Activated CD8-positive, alpha-beta memory T cell treated with anti-CD3 and anti-CD28 coated beads, Interleukin-2, amount 10 ng/mL, durations not matched to agents 7 days and 5 days (primary cell): ENCODE measurements at regions of chr5 and their contacts with region 1.

Region 1: GRCh38 chr5:39217365-39218281 is 1.7 kb downstream of the FYB1 start:
- DNase-seq: peak; percentile 89
- ATAC-seq: peak; percentile 72
- H3K4me3 Mint-ChIP-seq: peak overlapping the region; percentile 81
- H3K27ac Mint-ChIP-seq: peak overlapping the region; percentile 96
- H3K4me1 Mint-ChIP-seq: peaks cover 64% of the 10 kb centered on the region
- H3K27me3 Mint-ChIP-seq: no peaks in the 10 kb centered on the region

Region 2: DNA sequence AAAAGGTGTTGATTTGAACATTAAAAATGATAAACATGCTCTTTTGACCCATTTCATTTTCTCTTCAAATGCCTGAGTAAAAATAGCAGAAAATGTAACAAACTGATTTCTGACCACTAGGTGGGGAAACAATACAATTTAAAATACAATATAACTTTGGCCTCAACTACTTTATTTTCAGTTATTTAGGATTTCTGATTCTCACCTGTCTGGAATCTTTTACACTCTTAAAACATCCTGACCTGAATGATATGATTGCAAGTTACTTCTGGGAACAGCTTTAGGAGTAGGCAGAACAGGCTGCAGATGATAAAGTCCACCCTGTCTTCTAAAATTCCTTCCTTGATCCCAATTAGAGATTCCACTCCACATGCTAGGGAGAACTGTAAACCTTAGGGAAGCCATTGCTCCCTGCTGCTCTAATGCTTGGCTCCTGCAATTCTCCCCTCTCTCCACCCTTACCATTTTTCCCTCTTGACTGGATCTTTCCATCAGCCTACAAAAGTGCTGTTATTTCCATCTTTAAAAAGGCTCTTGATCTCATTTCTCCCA is 68.6 kb before region 1 on chr5:
- CTCF ChIA-PET with region 1: interaction called, 14 read pairs
- DNase-seq: no peak
- ATAC-seq: peak; percentile 52
- H3K4me3 Mint-ChIP-seq: no peak overlapping the region
- H3K27ac Mint-ChIP-seq: peak overlapping the region; percentile 62
- H3K4me1 Mint-ChIP-seq: peaks cover 48% of the 10 kb centered on the region
- H3K27me3 Mint-ChIP-seq: no peaks in the 10 kb centered on the region

Region 3: GRCh38 chr5:39177631-39177964 is 40.0 kb before region 1 on chr5:
- CTCF ChIA-PET with region 1: interaction called, 20 read pairs
- DNase-seq: no peak
- ATAC-seq: peak; percentile 49
- H3K4me3 Mint-ChIP-seq: peak overlapping the region; percentile 68
- H3K27ac Mint-ChIP-seq: peak overlapping the region; percentile 90
- H3K4me1 Mint-ChIP-seq: peaks cover 95% of the 10 kb centered on the region
- H3K27me3 Mint-ChIP-seq: no peaks in the 10 kb centered on the region

Region 4: DNA sequence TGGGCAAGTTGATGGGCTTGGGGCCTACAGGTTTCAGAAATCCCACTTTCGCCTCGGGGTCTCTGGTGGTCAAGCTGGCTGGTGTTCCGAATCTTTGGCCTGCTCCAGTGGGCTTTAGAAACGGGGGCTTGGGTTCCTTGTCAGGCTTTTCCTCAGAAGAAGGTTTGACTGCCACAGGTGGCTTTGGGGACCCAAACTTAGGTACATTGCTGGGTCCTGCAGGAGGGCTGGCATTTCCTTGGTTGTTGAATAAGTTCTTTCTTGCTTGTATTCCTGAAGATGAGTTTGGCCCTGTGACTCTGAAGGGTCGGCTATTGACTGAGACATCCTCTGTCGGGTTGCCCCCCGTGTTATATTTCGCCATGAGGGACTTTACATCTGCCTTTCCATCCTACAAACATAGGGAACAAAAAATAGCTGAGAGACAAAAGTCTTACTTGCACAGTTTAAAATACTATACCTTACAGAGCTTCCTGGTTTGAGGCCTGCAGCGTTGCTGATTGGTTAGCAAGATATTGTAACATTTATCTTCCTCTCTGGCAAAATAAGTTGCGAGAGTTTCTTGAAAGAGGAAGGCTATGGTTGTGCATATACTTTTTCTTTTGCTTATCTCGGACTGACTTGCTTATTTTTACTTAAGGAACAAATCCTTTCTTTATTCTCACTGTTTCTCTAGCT is 14.9 kb before region 1 on chr5:
- CTCF ChIA-PET with region 1: interaction called, 51 read pairs
- DNase-seq: peak; percentile 68
- ATAC-seq: peak; percentile 55
- H3K4me3 Mint-ChIP-seq: peak overlapping the region; percentile 97
- H3K27ac Mint-ChIP-seq: peak overlapping the region; percentile 95
- H3K4me1 Mint-ChIP-seq: peaks cover 43% of the 10 kb centered on the region
- H3K27me3 Mint-ChIP-seq: no peaks in the 10 kb centered on the region

Region 5: DNA sequence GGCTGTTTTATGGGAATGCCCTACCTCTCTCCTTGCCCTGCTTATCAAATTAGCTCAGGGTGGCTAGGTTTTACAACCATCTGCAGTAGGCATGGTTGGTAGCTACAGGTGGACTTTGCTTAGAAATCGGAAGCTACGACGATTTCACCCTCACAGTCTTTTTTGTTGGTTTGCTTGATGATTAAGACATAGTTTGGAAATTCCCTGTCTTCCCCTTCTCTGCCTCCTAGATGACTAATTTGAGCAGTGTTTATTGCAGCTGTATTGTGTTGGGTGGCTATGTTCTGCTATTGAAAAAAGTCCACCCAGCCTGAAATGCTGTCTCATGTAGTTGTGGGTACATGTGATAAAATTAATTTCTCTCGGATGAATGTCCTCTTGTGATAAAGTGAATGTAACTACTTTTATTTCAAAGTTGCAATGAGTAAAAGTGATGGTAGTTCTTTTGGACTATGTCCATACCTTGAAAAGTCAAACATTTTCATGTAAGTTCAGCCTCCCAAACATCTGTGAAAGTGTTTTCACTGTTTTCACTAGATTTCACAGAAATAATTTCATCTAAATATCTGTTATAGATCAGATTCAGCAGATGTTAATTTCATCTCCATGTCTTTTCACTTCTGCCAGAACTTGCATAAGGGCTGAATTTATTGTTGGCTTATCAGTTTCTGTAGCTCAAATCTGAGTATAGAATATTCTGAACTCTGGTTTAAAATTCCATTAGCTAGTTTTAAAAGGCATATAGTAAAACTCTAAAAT is 39.0 kb after region 1 on chr5:
- CTCF ChIA-PET with region 1: interaction called, 17 read pairs
- DNase-seq: no peak
- ATAC-seq: peak; percentile 51
- H3K4me3 Mint-ChIP-seq: peak overlapping the region; percentile 63
- H3K27ac Mint-ChIP-seq: peak overlapping the region; percentile 49
- H3K4me1 Mint-ChIP-seq: peaks cover 14% of the 10 kb centered on the region
- H3K27me3 Mint-ChIP-seq: no peaks in the 10 kb centered on the region

Region 6: GRCh38 chr5:39274398-39275085 is 56.9 kb after region 1 on chr5:
- CTCF ChIA-PET with region 1: interaction called, 63 read pairs
- DNase-seq: no peak
- ATAC-seq: peak; percentile 69
- H3K4me3 Mint-ChIP-seq: peak overlapping the region; percentile 74
- H3K27ac Mint-ChIP-seq: peak overlapping the region; percentile 97
- H3K4me1 Mint-ChIP-seq: peaks cover 47% of the 10 kb centered on the region
- H3K27me3 Mint-ChIP-seq: no peaks in the 10 kb centered on the region

Region 7: DNA sequence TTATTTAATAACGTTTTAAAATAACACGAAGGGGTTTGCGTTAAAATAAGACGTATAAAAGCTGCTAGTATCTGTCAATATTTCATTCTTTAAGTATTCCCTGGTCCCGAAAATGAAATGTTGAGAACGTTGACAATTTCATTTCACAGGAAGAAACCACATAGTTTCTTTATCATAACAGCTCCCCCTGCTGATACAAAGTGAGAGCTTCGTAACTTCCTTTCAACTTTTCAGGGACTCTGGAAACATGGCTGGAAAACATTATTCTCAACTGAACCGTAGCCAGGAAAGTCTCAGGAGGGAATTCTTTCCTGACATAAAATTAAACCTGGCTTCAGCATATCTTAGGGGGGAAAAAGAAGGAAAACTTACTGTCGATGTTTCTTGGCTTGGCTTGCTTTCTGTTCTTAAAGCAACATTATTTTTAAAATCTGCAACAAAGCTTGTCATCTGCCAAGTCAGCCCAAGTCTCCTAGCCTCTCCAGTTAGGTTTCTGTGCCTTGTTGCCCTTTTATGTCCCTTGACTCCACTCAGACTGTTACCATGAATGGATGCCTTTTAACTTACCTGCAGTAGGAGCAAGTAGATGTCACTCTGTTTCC is 330.0 kb after region 1 on chr5:
- CTCF ChIA-PET with region 1: interaction called, 12 read pairs
- DNase-seq: no peak
- ATAC-seq: no peak
- H3K4me3 Mint-ChIP-seq: no peak overlapping the region
- H3K27ac Mint-ChIP-seq: no peak overlapping the region
- H3K4me1 Mint-ChIP-seq: peaks cover 6% of the 10 kb centered on the region
- H3K27me3 Mint-ChIP-seq: peaks cover 17% of the 10 kb centered on the region